ENCODE measurements at regions of chr22 and their contacts with region 1.

Region 1: DNA sequence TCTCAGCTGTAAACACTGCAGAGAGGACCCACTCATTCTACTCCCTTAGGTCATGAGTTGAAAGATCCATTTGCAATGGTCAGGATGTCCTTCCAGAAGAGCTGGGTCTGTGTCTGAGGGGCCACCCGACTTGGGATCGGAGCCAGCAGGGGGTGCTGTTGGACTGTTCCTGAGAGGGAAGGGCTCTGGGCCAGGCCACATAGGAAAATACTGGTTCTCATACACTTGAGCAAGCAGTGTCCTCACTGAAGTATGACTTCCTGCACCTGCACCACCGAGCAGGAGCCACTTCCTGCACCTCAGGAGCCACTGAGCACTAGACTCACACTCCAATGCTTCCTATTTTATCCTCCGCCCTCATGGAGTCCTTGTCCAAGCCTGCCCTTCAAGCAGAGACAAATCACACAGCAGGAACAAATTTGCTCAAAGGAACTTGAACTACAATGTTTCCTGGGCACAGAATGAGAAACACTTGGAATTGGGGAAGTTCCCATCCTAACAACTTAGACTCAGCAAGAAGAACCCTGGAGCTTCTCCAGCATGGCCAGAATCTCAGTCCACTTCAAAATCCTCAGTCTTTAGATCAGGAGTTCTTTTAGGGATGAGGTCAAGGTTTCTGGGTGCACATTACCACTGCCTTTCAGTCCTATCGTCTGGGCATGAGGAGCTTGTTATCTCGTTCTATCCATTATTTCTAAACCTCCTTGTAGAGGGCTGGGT is 36.6 kb upstream of the VPREB1 start:
- DNase-seq: peak; percentile 92
- H3K4me3 Mint-ChIP-seq: no peak overlapping the region
- H3K27ac Mint-ChIP-seq: peak overlapping the region; percentile 9
- H3K4me1 Mint-ChIP-seq: peaks cover 37% of the 10 kb centered on the region
- H3K27me3 Mint-ChIP-seq: peaks cover 3% of the 10 kb centered on the region

Region 2: GRCh38 chr22:21681566-21682370 is 526.2 kb before region 1 on chr22:
- CTCF ChIA-PET with region 1: no interaction called
- intact Hi-C with region 1: no loop called
- DNase-seq: no peak
- H3K4me3 Mint-ChIP-seq: no peak overlapping the region
- H3K27ac Mint-ChIP-seq: no peak overlapping the region
- H3K4me1 Mint-ChIP-seq: no peaks in the 10 kb centered on the region
- H3K27me3 Mint-ChIP-seq: no peaks in the 10 kb centered on the region

Region 3: DNA sequence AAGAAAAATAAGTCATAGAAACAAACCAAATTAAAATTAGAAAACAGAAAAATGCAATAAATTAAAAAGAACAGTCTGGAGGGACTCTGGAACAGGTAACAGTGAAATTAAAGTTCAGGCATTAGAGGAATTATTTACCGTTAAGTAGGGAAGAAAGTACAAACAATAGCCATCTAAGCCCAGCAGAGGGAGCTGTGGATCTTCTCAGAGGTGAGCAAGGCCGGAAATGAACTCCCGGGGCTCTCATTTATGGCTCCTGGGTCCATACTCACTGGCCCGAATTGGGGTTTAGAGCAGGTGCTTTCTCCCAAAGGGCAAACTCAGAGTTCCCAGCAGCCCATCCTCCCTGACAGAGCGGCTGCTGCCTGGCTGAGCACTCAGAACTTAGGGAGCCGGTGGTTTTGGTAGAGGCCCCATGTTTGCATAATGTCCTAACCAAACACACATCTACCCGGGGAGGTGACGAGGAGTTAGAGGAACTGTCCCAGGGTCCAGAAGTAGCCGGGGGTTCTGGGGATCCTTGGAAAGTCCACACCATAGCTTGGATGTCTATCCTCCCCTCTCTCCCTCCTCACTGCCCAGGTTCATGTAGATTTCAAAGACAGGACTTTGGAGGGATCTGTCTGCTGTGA is 51.2 kb before region 1 on chr22:
- CTCF ChIA-PET with region 1: interaction called, 4 read pairs
- intact Hi-C with region 1: loop called (anchors 1 kb)
- DNase-seq: peak; percentile 87
- H3K4me3 Mint-ChIP-seq: no peak overlapping the region
- H3K27ac Mint-ChIP-seq: peak overlapping the region; percentile 17
- H3K4me1 Mint-ChIP-seq: peaks cover 7% of the 10 kb centered on the region
- H3K27me3 Mint-ChIP-seq: peaks cover 3% of the 10 kb centered on the region

Region 4: DNA sequence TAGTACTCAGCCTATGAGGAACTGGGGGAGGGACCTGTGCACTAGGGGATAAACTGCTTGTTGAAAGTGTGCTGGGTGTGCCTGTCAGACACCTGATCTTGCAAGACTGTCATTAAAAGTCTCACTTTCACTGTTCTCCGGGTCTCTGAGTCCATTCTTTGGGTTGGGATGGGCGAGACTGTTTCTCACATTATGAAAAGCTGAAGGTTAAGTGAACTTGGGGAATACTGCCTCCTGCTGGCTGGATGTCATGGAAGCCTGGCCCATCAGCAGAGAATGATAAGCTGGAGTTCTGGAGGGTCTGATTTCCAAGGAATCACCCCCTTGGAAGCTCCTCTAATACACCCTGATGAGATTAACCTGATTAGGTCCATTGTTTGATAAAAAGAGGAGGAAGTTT is 27.6 kb after region 1 on chr22:
- CTCF ChIA-PET with region 1: interaction called, 179 read pairs
- intact Hi-C with region 1: loop called (anchors 1 kb)
- DNase-seq: peak; percentile 84
- H3K4me3 Mint-ChIP-seq: no peak overlapping the region
- H3K27ac Mint-ChIP-seq: no peak overlapping the region
- H3K4me1 Mint-ChIP-seq: peaks cover 2% of the 10 kb centered on the region
- H3K27me3 Mint-ChIP-seq: no peaks in the 10 kb centered on the region

Region 5: DNA sequence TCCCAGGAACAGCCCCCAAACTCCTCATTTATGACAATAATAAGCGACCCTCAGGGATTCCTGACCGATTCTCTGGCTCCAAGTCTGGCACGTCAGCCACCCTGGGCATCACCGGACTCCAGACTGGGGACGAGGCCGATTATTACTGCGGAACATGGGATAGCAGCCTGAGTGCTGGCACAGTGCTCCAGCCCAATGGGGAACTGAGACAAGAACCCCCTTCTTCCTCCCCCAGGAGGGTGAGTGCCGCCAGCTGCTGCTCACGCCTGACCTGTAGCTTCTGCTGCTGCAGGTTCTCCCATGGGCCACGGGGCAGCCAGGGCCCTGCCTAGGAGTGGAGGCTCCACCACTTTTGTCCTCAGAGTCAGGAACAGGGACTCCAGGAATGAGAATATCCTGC is 114.8 kb after region 1 on chr22:
- CTCF ChIA-PET with region 1: interaction called, 5 read pairs
- intact Hi-C with region 1: loop called (anchors 2 kb)
- DNase-seq: no peak
- H3K4me3 Mint-ChIP-seq: no peak overlapping the region
- H3K27ac Mint-ChIP-seq: no peak overlapping the region
- H3K4me1 Mint-ChIP-seq: no peaks in the 10 kb centered on the region
- H3K27me3 Mint-ChIP-seq: peaks cover 2% of the 10 kb centered on the region

Region 6: DNA sequence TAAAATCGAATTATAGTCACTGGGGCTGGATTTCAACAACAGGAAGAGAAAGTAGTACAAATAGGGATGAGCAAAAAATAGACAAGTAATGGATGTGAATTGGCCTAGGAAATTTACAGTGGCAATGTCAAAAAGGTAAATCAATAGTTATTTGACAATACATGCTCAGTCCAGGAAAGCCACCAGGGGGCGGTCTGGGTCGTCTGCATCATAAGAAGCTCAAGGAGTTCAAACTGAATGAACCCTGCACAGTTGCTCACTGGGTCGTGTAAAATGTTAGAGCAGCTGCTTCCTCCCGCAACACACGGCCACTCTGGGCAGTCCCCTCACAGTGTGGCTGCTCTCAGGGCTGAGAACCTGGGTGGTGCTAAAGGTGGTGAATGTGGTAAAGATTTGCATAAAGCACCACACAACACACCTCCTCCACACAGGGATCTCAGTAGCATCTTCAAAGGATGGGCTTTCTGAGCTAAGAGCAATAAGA is 214.7 kb after region 1 on chr22:
- CTCF ChIA-PET with region 1: interaction called, 5 read pairs
- intact Hi-C with region 1: loop called (anchors 10 kb)
- DNase-seq: peak; percentile 85
- H3K4me3 Mint-ChIP-seq: no peak overlapping the region
- H3K27ac Mint-ChIP-seq: no peak overlapping the region
- H3K4me1 Mint-ChIP-seq: no peaks in the 10 kb centered on the region
- H3K27me3 Mint-ChIP-seq: peaks cover 10% of the 10 kb centered on the region

Measured in activated naive CD4-positive, alpha-beta T cell treated with anti-CD3 and anti-CD28 coated beads for 36 hours (primary cell).